Posterior vena cava (tissue), 2 donors: ENCODE measurements at regions of chr1 and their contacts with region 1.

Region 1: GRCh38 chr1:54406339-54407153 is at the start of gene SSBP3:
- DNase-seq: peak; percentile 97
- total RNA-seq, gene SSBP3: 41.8 to 56.1 TPM

Region 2: GRCh38 chr1:53172426-53173128 is 1234.0 kb before region 1 on chr1:
- intact Hi-C with region 1: no loop called
- DNase-seq: no peak

Region 3: DNA sequence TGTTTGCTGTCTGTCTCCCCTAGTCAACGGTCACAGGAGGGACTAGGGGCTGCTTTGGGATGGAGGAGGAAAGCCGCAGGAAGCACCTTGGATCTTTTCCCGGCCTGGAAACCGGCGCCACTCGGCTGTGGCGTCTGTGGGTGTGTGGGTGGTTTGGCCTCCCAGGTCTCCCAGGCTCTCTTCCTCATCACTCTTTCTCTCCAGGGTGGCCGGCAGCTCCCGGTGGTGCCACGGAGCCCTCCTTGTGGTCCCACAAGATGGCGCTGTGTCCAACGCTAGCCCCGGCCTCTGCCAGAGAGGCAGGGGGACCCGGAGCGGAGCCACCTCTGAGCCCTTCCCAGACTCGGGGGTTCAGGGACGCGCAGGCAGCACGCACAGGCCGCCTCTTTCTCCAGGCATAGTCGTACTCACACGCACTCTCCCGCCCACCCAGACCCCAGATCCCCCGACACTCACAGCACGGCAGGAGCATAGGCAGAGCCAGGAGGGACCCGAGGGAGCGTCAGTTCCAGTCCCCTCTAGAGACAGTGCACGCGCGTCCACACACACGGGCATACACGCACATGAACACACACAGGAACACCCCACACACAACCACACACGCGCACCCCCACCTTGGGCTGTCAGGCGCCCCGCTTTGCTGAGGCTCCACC is 284.9 kb before region 1 on chr1:
- intact Hi-C with region 1: loop called (anchors 10 kb)
- DNase-seq: peak; percentile 92

Region 4: GRCh38 chr1:54199765-54200518 is 206.6 kb before region 1 on chr1 and contains the starts of genes CYB5RL and MRPL37:
- intact Hi-C with region 1: loop called in 1 of 2 experiments (anchors 10 kb)
- DNase-seq: peak; percentile 95
- total RNA-seq, gene CYB5RL: 5.0 to 6.7 TPM
- total RNA-seq, gene MRPL37: 40.9 to 41.9 TPM

Region 5: DNA sequence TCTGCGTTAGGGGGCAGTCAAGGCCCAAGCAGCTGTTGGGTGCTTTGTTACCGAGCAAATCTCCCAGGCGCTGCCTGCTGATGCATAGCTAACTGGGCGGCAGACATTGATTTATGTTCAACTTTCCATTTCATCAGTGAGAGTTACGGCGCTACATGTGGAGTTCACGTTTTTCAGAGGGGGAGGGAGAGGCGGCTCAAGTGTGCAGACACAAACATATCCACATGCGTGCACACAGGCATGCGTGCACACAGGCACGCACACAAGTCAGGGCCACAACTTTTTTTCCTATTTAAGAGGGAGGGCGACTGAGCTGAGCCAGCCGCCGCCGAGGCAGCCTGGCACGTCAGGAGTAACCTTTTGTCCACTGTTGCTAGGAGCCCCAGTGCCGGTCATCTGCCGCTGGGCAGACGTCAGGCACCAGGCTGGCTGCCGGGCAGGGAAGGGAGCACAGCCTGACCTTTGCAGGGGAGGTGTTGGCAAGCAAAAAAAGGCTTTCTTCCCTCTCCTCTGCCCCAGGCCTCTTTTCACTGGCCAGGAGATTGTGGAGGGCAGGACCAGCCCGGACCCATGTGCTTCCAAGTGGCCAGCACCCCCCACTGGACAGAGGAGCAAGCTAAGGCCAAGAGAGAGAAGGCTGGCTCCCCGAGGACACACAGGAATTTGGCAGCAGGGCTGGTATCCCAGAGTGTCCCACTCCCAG is 133.3 kb before region 1 on chr1:
- intact Hi-C with region 1: loop called (anchors 2 to 10 kb)
- DNase-seq: peak; percentile 93

Region 6: DNA sequence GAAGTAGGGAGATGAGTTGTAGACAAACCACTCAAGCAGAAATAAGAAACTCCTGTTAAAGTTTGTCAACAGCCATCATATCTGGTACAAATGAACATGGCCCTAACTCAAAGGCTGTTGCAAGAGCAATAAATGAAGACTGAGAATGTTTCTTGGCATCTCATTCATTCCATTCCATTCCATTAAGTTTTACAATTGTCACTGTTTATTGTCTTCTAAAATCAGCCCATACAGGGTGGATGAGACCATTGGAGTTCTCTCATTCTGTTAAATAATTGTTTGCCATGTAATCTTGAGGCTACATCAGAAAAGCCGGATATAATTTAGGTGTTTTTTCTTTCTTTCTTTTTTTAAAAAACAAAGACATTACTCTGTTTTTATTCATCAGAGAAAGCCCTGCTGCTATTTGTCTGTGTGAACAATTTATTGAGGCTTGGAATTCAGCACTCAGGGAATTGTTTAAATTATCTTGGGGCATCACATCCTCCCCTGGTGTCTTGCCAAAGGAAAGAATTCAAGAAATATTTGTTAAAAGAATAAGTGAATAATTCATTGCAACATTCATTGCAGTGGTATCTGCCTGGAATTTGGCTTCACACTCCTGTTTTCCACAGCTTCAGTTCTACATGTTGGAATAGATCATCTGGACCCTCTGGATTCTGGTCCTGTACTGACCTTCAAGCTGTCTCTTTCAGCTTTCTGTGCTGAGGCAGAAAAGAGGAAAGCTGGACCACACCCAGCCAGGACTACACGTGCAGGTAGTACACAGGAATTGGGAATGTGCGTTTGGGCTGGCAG is 1568.4 kb after region 1 on chr1:
- intact Hi-C with region 1: no loop called
- DNase-seq: no peak